PC-9 (cell line): ENCODE measurements at regions of chr9 and their contacts with region 1.

Region 1: DNA sequence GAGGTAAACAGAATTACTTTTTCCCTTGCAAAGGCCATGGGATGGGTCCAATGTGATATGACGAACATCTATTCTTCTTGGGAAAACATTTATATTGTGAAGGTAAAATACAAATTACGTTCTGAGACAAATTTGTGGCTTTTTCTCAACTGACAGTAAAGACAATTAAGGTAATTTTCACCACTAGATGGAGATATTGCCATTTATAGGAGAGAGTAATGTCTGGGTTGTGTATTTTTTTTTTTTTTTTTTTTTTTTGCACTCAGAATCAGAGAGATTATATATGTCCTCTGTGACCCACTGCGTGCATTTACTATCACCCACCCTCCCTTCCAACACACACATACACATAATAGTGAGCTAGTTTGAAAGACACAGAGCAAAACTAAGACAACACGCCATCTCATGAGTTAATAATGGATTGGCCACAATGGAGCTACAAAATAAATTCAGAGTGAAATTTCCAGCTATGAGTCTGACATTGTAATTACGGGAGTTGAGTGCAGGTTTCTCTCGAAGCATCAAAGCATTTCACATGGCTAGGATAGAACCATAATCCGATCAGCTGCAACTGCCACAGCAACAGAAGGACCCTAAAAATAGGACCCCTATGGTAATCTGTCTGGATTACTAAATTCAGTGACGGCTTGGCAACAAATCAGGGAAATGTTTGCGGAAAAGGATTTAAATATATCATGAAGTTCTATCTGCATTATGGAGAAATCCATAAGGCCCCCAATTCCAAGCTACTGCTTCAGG is 49.2 kb downstream of the ANXA1 start:
- DNase-seq: peak in 1 of 2 experiments; percentile 8
- H3K4me3 ChIP-seq: peak overlapping the region; percentile 31; the same call in 1 of the 2 replicates
- H3K27ac ChIP-seq: no peak overlapping the region
- H3K4me1 ChIP-seq: peaks cover 8% of the 10 kb centered on the region; the same call in 1 of the 2 replicates
- H3K27me3 ChIP-seq: no peaks in the 10 kb centered on the region
- CTCF ChIP-seq: peak; percentile 76

Region 2: DNA sequence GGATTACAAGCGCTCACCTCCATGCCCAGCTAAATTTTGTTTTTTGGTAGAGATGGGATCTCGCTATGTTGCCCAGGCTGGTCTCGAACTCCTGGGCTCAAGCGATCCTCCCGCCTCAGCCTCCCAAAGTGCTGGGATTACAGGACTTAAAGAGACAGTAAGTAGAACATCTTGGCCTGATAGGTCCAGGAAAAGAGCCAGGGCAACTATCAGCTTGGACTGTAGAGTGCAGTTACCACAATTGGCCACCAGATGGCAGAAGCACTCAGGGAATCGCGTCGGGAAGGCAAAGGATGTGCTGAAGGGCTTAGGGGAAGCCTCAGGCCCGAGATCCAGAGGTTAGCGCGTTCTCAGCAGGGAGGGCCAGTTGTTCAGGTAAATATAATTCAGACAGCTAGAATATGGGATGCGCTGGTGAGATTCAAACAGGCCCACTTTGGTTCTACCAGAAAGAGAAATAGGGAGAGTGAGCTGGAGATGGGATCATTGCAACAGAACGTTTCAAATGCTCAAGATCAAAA is 1161.9 kb before region 1 on chr9:
- CTCF ChIA-PET with region 1: no interaction called
- POLR2A ChIA-PET with region 1: no interaction called
- intact Hi-C with region 1: loop called (anchors 2 kb)
- DNase-seq: peak; percentile 46 to 82
- H3K4me3 ChIP-seq: no peak overlapping the region
- H3K27ac ChIP-seq: no peak overlapping the region
- H3K4me1 ChIP-seq: 0 out of 2 replicates have a peak, but pooled peaks cover 6% of the 10 kb centered on the region
- H3K27me3 ChIP-seq: no peaks in the 10 kb centered on the region
- CTCF ChIP-seq: peak; percentile 97

Region 3: GRCh38 chr9:72648324-72649126 is 552.3 kb before region 1 on chr9:
- CTCF ChIA-PET with region 1: interaction called, 10 read pairs
- POLR2A ChIA-PET with region 1: no interaction called
- intact Hi-C with region 1: no loop called
- DNase-seq: no peak
- H3K4me3 ChIP-seq: no peak overlapping the region
- H3K27ac ChIP-seq: no peak overlapping the region
- H3K4me1 ChIP-seq: no peaks in the 10 kb centered on the region
- H3K27me3 ChIP-seq: no peaks in the 10 kb centered on the region
- CTCF ChIP-seq: no peak

Region 4: GRCh38 chr9:72871685-72872084 is 329.2 kb before region 1 on chr9:
- CTCF ChIA-PET with region 1: no interaction called
- POLR2A ChIA-PET with region 1: no interaction called
- intact Hi-C with region 1: loop called (anchors 1 kb)
- DNase-seq: no peak
- H3K4me3 ChIP-seq: no peak overlapping the region
- H3K27ac ChIP-seq: no peak overlapping the region
- H3K4me1 ChIP-seq: no peaks in the 10 kb centered on the region
- H3K27me3 ChIP-seq: no peaks in the 10 kb centered on the region
- CTCF ChIP-seq: peak; percentile 73

Region 5: DNA sequence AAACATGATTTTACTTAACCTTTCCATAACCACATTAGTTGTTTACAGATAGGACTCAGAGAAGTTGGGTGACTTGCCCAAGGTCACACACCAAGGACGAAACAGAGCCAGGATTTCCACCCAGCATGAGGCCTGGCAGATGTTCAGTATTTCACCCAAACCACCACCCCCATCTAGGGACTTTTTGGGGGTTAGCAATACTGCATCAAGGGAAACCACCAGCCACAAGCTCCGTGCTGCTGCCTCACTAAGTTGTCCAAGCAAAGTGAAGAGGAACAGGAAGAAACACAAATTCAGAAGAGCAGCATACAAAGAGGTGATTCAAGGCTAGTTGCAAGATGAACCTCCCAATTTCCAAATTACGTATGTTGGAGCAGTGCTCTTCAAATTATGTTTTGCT is 1076.7 kb after region 1 on chr9:
- CTCF ChIA-PET with region 1: no interaction called
- POLR2A ChIA-PET with region 1: no interaction called
- intact Hi-C with region 1: loop called (anchors 2 kb)
- DNase-seq: no peak
- H3K4me3 ChIP-seq: no peak overlapping the region
- H3K27ac ChIP-seq: no peak overlapping the region
- H3K4me1 ChIP-seq: no peaks in the 10 kb centered on the region
- H3K27me3 ChIP-seq: no peaks in the 10 kb centered on the region
- CTCF ChIP-seq: no peak

Region 6: DNA sequence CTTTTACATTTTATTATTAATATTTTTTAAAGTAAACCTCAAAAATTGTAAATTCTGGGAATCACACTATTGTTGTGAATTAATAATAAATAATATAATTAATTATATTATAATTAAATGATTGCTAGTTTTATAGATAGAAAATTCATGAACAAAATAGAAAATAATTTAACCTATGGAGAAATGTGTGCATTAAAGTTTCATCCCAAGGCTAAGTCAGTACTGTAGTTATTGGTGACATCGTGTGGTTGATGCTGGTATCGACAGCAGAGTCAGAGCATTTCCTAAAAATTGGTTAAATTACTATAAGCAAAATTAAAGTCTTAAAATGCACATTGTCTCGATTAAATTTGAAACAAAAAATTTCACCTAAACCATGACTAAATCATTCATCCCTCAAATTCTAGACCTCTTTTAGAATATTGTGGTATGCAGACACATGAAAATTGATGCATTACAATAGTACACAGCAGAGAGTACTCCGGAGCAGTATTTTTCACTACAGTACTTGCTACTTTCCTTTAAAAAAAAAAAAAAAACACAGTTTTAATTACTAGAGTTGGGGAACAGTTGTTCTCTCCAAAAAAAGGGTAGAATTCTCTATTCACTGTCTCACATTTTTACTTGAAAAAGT is 1370.1 kb after region 1 on chr9:
- CTCF ChIA-PET with region 1: interaction called, 3 read pairs
- POLR2A ChIA-PET with region 1: no interaction called
- intact Hi-C with region 1: loop called (anchors 2 kb)
- DNase-seq: peak in 1 of 2 experiments; percentile 10
- H3K4me3 ChIP-seq: no peak overlapping the region
- H3K27ac ChIP-seq: no peak overlapping the region
- H3K4me1 ChIP-seq: no peaks in the 10 kb centered on the region
- H3K27me3 ChIP-seq: no peaks in the 10 kb centered on the region
- CTCF ChIP-seq: peak; percentile 78